Activated CD4-positive, alpha-beta T cell treated with anti-CD3 and anti-CD28 coated beads for 36 hours (primary cell): ENCODE measurements at regions of chr20 and their contacts with region 1.

Region 1: GRCh38 chr20:3696200-3696599 is 14.4 kb upstream of the ADAM33 start:
- DNase-seq: peak; percentile 27
- ATAC-seq: no peak
- H3K4me3 Mint-ChIP-seq: no peak overlapping the region
- H3K27ac Mint-ChIP-seq: no peak overlapping the region
- H3K4me1 Mint-ChIP-seq: no peaks in the 10 kb centered on the region
- H3K27me3 Mint-ChIP-seq: no peaks in the 10 kb centered on the region

Region 2: DNA sequence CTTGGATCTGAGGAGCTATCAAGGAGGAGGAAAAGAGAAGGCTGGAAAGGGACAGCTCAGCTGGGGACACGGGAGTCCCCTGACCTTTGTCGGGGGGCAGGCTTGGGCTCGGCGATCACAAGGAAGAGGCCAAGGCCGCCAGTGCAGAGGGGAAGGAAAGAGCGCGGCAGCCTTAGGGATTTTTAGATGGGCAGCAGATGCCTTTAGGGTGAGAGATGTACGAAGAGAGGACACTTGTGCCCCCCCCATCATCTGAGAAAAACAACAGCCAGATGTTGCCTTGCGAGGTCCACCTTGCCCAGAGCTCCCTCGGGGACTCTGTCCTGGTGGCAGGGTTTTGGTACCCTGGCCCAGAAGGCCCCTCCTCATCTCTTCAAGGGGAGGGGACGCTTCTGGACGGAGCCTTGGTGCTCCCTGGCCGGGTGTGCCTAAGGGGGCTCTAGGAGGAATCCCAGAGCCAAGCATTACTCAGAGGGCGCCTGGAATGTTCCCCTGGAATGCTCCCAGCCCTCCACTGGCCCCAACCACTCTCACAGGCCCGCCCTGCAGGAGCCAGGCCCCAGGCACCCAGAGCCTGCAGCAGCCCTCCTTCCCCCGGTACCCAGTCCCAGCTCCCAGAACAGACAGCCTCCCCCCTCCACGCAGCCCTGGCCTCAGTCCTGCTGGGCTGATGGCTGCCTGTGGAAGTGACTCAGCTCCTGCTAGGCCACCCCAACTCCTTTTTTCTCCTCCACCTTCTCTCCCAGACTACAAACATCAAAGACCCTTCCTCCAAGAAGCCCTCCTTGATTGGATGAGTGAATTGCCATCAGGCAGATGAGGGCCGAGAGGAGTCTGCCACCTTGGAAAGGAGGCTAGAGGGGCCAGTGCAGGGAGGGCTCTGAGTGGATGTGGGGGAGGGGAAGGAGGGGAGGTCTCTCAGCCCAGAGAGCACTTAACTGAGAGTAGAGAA is 16.2 kb before region 1 on chr20:
- CTCF ChIA-PET with region 1: interaction called, 18 read pairs
- POLR2A ChIA-PET with region 1: no interaction called
- intact Hi-C with region 1: no loop called
- DNase-seq: no peak
- ATAC-seq: no peak
- H3K4me3 Mint-ChIP-seq: no peak overlapping the region
- H3K27ac Mint-ChIP-seq: no peak overlapping the region
- H3K4me1 Mint-ChIP-seq: peaks cover 6% of the 10 kb centered on the region
- H3K27me3 Mint-ChIP-seq: peaks cover 37% of the 10 kb centered on the region

Region 3: GRCh38 chr20:3710703-3711483 is 14.7 kb after region 1 on chr20:
- CTCF ChIA-PET with region 1: interaction called, 16 read pairs
- POLR2A ChIA-PET with region 1: no interaction called
- intact Hi-C with region 1: no loop called
- DNase-seq: peak; percentile 88
- ATAC-seq: peak; percentile 75
- H3K4me3 Mint-ChIP-seq: no peak overlapping the region
- H3K27ac Mint-ChIP-seq: no peak overlapping the region
- H3K4me1 Mint-ChIP-seq: no peaks in the 10 kb centered on the region
- H3K27me3 Mint-ChIP-seq: no peaks in the 10 kb centered on the region

Region 4: DNA sequence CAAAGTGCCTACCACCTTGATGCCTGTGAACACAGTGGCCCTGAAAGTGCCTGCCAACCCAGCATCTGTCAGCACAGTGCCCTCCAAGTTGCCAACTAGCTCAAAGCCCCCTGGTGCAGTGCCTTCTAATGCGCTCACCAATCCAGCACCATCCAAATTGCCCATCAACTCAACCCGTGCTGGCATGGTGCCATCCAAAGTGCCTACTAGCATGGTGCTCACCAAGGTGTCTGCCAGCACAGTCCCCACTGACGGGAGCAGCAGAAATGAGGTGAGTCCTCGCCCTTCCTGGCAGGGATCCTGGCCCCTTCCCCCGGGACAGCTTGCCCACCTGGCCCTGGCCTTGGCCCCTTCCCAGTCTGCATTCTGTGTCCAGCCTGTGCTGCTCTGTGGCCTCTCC is 168.3 kb after region 1 on chr20:
- CTCF ChIA-PET with region 1: no interaction called
- POLR2A ChIA-PET with region 1: no interaction called
- intact Hi-C with region 1: loop called in 1 of 2 experiments (anchors 5 kb)
- DNase-seq: no peak
- ATAC-seq: no peak
- H3K4me3 Mint-ChIP-seq: no peak overlapping the region
- H3K27ac Mint-ChIP-seq: no peak overlapping the region
- H3K4me1 Mint-ChIP-seq: no peaks in the 10 kb centered on the region
- H3K27me3 Mint-ChIP-seq: no peaks in the 10 kb centered on the region

Region 5: DNA sequence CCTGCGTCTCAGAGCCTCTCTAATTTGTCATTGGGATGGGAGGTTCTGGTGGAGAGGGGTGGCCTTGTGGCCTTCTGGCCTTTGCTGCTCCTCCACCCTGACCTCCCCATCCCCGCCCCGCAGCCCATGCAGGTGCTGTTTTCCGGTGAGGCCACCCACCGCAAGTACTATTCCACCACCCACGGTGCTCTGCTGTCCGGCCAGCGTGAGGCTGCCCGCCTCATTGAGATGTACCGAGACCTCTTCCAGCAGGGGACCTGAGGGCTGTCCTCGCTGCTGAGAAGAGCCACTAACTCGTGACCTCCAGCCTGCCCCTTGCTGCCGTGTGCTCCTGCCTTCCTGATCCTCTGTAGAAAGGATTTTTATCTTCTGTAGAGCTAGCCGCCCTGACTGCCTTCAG is 490.9 kb after region 1 on chr20:
- CTCF ChIA-PET with region 1: no interaction called
- POLR2A ChIA-PET with region 1: interaction called, 10 read pairs
- intact Hi-C with region 1: no loop called
- DNase-seq: no peak
- ATAC-seq: no peak
- H3K4me3 Mint-ChIP-seq: no peak overlapping the region
- H3K27ac Mint-ChIP-seq: no peak overlapping the region
- H3K4me1 Mint-ChIP-seq: no peaks in the 10 kb centered on the region
- H3K27me3 Mint-ChIP-seq: no peaks in the 10 kb centered on the region